Keratinocyte (primary cell): ENCODE measurements at regions of chr1 and their contacts with region 1.

Region 1: GRCh38 chr1:158124999-158125398 is 55.7 kb upstream of the CD1D start:
- DNase-seq: peak; percentile 92
- H3K4me3 ChIP-seq: no peak overlapping the region
- H3K27ac ChIP-seq: no peak overlapping the region
- H3K4me1 ChIP-seq: peaks cover 19% of the 10 kb centered on the region
- H3K27me3 ChIP-seq: no peaks in the 10 kb centered on the region
- CTCF ChIP-seq: peak; percentile 83 to 98 (median 94)

Region 2: GRCh38 chr1:157963713-157964112 is 161.3 kb before region 1 on chr1:
- dilution Hi-C with region 1: loop called (anchors 25 kb)
- DNase-seq: no peak
- H3K4me3 ChIP-seq: no peak overlapping the region
- H3K27ac ChIP-seq: no peak overlapping the region
- H3K4me1 ChIP-seq: peaks cover 24% of the 10 kb centered on the region
- H3K27me3 ChIP-seq: no peaks in the 10 kb centered on the region
- CTCF ChIP-seq: peak; percentile 75 to 86 (median 78)

Region 3: GRCh38 chr1:158177700-158178450 is 52.9 kb after region 1 on chr1:
- dilution Hi-C with region 1: no loop called
- DNase-seq: peak; percentile 25
- H3K4me3 ChIP-seq: peak overlapping the region; percentile 23 to 57 (median 41)
- H3K27ac ChIP-seq: no peak overlapping the region
- H3K4me1 ChIP-seq: peaks cover 18% of the 10 kb centered on the region
- H3K27me3 ChIP-seq: no peaks in the 10 kb centered on the region
- CTCF ChIP-seq: no peak